ENCODE measurements at regions of chrX and their contacts with region 1.

Region 1: GRCh38 chrX:108699368-108699767 is 37.0 kb downstream of the IRS4 start:
- H3K4me3 ChIP-seq: no peak overlapping the region
- H3K27ac ChIP-seq: no peak overlapping the region
- H3K4me1 ChIP-seq: no peaks in the 10 kb centered on the region
- CTCF ChIP-seq: no peak

Region 2: DNA sequence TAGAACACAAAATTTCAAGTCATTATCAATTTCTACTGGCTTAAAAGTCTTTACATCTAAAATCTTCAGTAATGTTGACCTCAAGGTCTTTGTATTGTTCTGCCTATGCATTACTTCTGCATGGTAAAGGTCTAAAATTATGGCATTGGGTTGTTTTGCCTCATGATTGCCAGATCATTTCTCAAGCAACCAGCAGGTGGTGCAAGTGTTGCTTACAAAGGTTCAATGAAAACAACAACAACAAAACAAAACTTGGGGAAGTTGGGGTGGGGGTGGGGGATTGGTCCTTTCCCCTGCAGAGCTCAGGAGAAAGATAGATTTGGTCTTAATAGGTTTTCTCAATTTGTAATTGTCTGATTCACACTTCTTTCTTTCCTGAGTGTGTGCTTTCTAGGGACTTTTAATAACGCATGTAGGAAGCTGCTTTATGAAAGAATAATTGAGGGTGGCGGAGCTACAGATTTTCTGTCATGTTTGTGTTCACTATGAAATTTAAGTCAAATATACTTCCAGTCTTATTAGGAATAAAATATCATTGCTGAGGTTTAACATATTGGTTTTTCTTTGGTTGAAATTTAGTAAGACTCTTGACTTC is 114.7 kb before region 1 on chrX:
- CTCF ChIA-PET with region 1: interaction called, 11 read pairs
- POLR2A ChIA-PET with region 1: no interaction called
- H3K4me3 ChIP-seq: no peak overlapping the region
- H3K27ac ChIP-seq: no peak overlapping the region
- H3K4me1 ChIP-seq: 0 out of 2 replicates have a peak, but pooled peaks cover 4% of the 10 kb centered on the region
- CTCF ChIP-seq: no peak

Region 3: DNA sequence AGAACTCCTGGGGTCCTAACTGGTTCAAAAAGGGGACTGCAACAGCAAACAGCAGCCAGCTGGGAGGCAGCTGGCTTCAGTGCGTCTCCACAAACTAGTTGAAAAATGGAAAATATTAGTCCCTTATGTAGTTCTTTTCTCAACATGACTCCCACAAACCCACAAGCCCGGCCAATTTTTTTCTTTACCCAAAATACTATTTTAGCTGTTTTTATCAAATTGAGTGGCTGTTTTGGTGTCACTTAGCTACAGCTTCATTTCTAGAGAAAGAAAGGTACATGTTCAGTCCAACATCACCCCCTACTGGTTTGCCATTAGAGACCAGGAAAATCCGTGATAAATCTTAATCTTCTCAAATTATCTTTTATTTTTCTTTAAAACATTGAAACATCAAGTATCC is 685.3 kb after region 1 on chrX:
- CTCF ChIA-PET with region 1: interaction called, 81 read pairs
- POLR2A ChIA-PET with region 1: interaction called, 5 read pairs
- H3K4me3 ChIP-seq: no peak overlapping the region
- H3K27ac ChIP-seq: no peak overlapping the region
- H3K4me1 ChIP-seq: no peaks in the 10 kb centered on the region
- CTCF ChIP-seq: no peak

Region 4: GRCh38 chrX:109475174-109475891 is 776.0 kb after region 1 on chrX:
- CTCF ChIA-PET with region 1: interaction called, 30 read pairs
- POLR2A ChIA-PET with region 1: no interaction called
- H3K4me3 ChIP-seq: no peak overlapping the region
- H3K27ac ChIP-seq: no peak overlapping the region
- H3K4me1 ChIP-seq: no peaks in the 10 kb centered on the region
- CTCF ChIP-seq: peak; percentile 44

Region 5: DNA sequence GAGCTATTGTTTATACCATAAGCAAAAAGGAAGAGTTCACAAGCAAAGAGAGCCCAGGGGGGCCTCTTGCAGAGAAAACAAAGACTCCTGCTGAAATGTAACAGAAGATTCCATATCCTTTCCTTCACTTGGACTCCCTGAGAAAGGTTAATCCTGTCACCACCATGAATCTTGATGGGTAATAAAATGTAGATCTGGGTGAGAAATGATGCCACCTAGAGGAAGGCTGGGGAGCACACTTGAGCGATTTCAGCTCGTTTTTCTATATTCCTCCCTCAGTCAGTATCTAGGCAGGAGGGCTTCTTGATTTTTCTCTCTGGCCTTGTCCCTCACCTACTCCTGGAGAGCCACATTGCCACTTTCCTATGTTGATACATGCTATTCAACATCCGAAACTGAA is 935.8 kb after region 1 on chrX:
- CTCF ChIA-PET with region 1: interaction called, 10 read pairs
- POLR2A ChIA-PET with region 1: no interaction called
- H3K4me3 ChIP-seq: no peak overlapping the region
- H3K27ac ChIP-seq: no peak overlapping the region
- H3K4me1 ChIP-seq: no peaks in the 10 kb centered on the region
- CTCF ChIP-seq: 0 out of 2 replicates have a peak, but pooled peaks have one; percentile 7

Measured in HEK293 (cell line).